Naive thymus-derived CD4-positive, alpha-beta T cell (primary cell): ENCODE measurements at regions of chr4 and their contacts with region 1.

Region 1: DNA sequence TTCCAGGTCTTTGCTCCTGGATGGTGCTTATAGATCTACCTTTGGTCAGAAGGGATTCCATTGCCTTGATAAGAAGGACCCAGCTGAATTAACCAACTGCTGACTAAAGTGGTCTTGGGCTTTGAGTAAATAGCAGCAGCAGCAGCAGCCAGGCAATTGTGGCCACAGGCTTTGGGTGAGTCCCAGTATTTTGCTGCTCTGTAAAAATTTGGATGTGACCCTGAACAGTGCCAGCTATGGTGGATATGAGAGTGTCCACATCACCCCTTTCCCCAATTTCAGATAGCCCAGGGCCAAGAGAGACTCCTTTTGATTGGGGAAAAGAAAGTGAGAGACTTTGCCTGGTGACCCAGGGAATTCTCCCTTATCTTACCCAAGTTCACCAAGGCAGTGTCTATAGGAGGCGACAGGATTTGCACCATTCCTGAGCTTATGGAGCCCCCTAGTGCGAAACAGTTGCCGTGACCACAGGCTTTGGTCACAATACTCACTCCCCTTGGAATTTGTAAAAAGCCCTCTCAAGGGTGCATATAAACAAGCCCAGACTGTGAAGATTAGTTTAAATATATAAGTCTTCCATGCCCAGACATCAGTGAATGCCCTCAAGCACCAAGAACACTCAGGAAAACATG is 518.0 kb downstream of the TMA16 start:
- DNase-seq: peak in 4 of 9 donors; percentile 10 to 37 (median 26)
- ATAC-seq: peak; percentile 29
- H3K4me3 ChIP-seq: no peak overlapping the region
- H3K4me3 Mint-ChIP-seq: peak overlapping the region in 1 of 10 donors; percentile 1
- H3K27ac ChIP-seq: no peak overlapping the region
- H3K27ac Mint-ChIP-seq: no peak overlapping the region
- H3K4me1 ChIP-seq: peaks cover 0 to 6% of the 10 kb centered on the region in 2 donors
- H3K4me1 Mint-ChIP-seq: peaks cover 0 to 32% (median 18%) of the 10 kb centered on the region in 7 donors
- H3K27me3 ChIP-seq: no peaks in the 10 kb centered on the region
- H3K27me3 Mint-ChIP-seq: no peaks in the 10 kb centered on the region

Region 2: GRCh38 chr4:163048447-163048846 is 964.1 kb before region 1 on chr4:
- CTCF ChIA-PET with region 1: no interaction called
- POLR2A ChIA-PET with region 1: no interaction called
- intact Hi-C with region 1: loop called in 1 of 2 experiments (anchors 5 kb)
- DNase-seq: peak in 4 of 9 donors; percentile 3 to 8 (median 5)
- ATAC-seq: no peak
- H3K4me3 ChIP-seq: no peak overlapping the region
- H3K4me3 Mint-ChIP-seq: no peak overlapping the region
- H3K27ac ChIP-seq: no peak overlapping the region
- H3K27ac Mint-ChIP-seq: no peak overlapping the region
- H3K4me1 ChIP-seq: no peaks in the 10 kb centered on the region
- H3K4me1 Mint-ChIP-seq: no peaks in the 10 kb centered on the region
- H3K27me3 ChIP-seq: no peaks in the 10 kb centered on the region
- H3K27me3 Mint-ChIP-seq: peaks cover 0 to 16% (median 11%) of the 10 kb centered on the region in 5 donors

Region 3: GRCh38 chr4:163681208-163681821 is 331.2 kb before region 1 on chr4:
- CTCF ChIA-PET with region 1: interaction called, 4 read pairs
- POLR2A ChIA-PET with region 1: no interaction called
- intact Hi-C with region 1: loop called in 1 of 2 experiments (anchors 1 kb)
- DNase-seq: peak in 7 of 9 donors; percentile 53 to 72 (median 69)
- ATAC-seq: peak; percentile 92
- H3K4me3 ChIP-seq: no peak overlapping the region
- H3K4me3 Mint-ChIP-seq: no peak overlapping the region
- H3K27ac ChIP-seq: no peak overlapping the region
- H3K27ac Mint-ChIP-seq: no peak overlapping the region
- H3K4me1 ChIP-seq: peaks cover 0 to 4% of the 10 kb centered on the region in 2 donors
- H3K4me1 Mint-ChIP-seq: peaks cover 0 to 31% (median 10%) of the 10 kb centered on the region in 7 donors
- H3K27me3 ChIP-seq: no peaks in the 10 kb centered on the region
- H3K27me3 Mint-ChIP-seq: peaks cover 0 to 4% (median 0%) of the 10 kb centered on the region in 5 donors

Region 4: GRCh38 chr4:163815776-163816175 is 196.7 kb before region 1 on chr4:
- CTCF ChIA-PET with region 1: interaction called, 3 read pairs
- POLR2A ChIA-PET with region 1: no interaction called
- intact Hi-C with region 1: loop called in 1 of 2 experiments (anchors 1 kb)
- DNase-seq: no peak
- ATAC-seq: no peak
- H3K4me3 ChIP-seq: no peak overlapping the region
- H3K4me3 Mint-ChIP-seq: no peak overlapping the region
- H3K27ac ChIP-seq: no peak overlapping the region
- H3K27ac Mint-ChIP-seq: no peak overlapping the region
- H3K4me1 ChIP-seq: no peaks in the 10 kb centered on the region
- H3K4me1 Mint-ChIP-seq: peaks cover 0 to 4% (median 0%) of the 10 kb centered on the region in 7 donors
- H3K27me3 ChIP-seq: no peaks in the 10 kb centered on the region
- H3K27me3 Mint-ChIP-seq: peaks cover 0 to 5% (median 0%) of the 10 kb centered on the region in 5 donors

Region 5: DNA sequence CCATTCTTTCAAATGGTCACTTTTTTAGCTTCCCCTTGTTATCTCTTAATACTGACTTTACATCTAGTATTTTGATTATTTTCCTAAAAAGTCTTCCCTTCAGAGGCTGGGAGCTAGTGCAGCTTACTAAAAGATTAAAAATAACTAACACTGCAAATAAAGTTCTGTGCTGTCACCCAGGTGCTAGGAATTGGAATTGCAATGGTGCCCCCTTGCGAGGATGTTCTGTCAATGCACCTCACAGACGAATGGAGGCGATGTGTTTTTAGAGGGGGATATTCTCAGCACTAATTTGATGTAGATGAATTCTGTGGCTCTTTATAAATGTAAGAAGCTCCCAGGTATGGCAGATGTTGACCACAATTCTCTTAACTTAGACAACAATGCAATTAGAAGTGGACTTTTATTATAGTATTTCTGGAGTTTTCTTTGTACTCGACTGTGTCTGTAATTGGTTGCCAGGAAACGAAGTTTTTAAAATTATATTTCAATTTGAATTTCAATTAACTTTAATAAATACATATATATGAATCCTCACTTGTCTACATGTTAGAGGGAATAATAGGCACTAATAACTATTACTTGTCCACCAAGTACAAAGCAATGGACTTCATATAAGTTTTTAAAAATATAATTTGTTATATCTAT is 719.4 kb after region 1 on chr4:
- CTCF ChIA-PET with region 1: interaction called, 3 read pairs
- POLR2A ChIA-PET with region 1: no interaction called
- intact Hi-C with region 1: loop called in 1 of 2 experiments (anchors 10 kb)
- DNase-seq: peak; percentile 10 to 46 (median 39)
- ATAC-seq: peak; percentile 58
- H3K4me3 ChIP-seq: no peak overlapping the region
- H3K4me3 Mint-ChIP-seq: no peak overlapping the region
- H3K27ac ChIP-seq: no peak overlapping the region
- H3K27ac Mint-ChIP-seq: no peak overlapping the region
- H3K4me1 ChIP-seq: no peaks in the 10 kb centered on the region
- H3K4me1 Mint-ChIP-seq: peaks cover 0 to 4% (median 0%) of the 10 kb centered on the region in 7 donors
- H3K27me3 ChIP-seq: no peaks in the 10 kb centered on the region
- H3K27me3 Mint-ChIP-seq: peaks cover 10 to 16% (median 15%) of the 10 kb centered on the region in 5 donors